HepG2 (cell line): ENCODE measurements at regions of chr2 and their contacts with region 1.

Region 1: GRCh38 chr2:26772064-26773001 is 8.2 kb downstream of the SLC35F6 start:
- DNase-seq: peak; percentile 83
- ATAC-seq: peak; percentile 83
- H3K4me3 ChIP-seq: no peak overlapping the region
- H3K27ac ChIP-seq: peak overlapping the region; percentile 1
- H3K4me1 ChIP-seq: peaks cover 24% of the 10 kb centered on the region
- H3K27me3 ChIP-seq: no peaks in the 10 kb centered on the region
- CTCF ChIP-seq: no peak
- EP300 ChIP-seq: peak in 1 of 2 experiments; percentile 42; a peak in 1 of 4 replicates
- POLR2A ChIP-seq: no peak
- RAD21 ChIP-seq: no peak

Region 2: DNA sequence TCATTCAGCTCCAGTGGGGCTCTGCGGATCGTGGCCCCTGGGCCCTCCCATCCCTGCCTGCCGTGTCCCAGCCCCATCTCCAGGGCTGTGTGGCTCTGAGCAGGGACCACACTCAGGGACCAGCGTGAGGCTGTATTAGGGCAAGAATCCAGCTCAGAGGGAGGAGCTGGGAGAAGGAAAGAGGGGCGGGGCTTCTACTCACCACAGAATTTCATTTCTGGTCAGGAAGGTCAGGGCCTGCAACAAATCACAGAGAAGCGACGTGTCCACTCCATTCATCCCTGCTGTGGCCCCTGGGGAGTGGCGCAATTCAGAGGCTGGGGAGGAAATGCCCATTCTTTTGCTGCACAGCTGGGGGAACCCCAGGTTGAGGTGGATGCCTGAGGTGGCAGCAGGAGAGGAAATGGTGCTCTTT is 132.0 kb before region 1 on chr2:
- CTCF ChIA-PET with region 1: no interaction called
- POLR2A ChIA-PET with region 1: no interaction called
- in situ Hi-C with region 1: no loop called
- intact Hi-C with region 1: no loop called
- DNase-seq: peak; percentile 18
- ATAC-seq: peak; percentile 44; the same call in 2 of the 3 replicates
- H3K4me3 ChIP-seq: no peak overlapping the region
- H3K27ac ChIP-seq: no peak overlapping the region
- H3K4me1 ChIP-seq: no peaks in the 10 kb centered on the region
- H3K27me3 ChIP-seq: peaks cover 4 to 61% of the 10 kb centered on the region in 2 experiments; a peak in 4 of 5 replicates
- CTCF ChIP-seq: no peak
- EP300 ChIP-seq: no peak
- POLR2A ChIP-seq: no peak
- RAD21 ChIP-seq: no peak

Region 3: DNA sequence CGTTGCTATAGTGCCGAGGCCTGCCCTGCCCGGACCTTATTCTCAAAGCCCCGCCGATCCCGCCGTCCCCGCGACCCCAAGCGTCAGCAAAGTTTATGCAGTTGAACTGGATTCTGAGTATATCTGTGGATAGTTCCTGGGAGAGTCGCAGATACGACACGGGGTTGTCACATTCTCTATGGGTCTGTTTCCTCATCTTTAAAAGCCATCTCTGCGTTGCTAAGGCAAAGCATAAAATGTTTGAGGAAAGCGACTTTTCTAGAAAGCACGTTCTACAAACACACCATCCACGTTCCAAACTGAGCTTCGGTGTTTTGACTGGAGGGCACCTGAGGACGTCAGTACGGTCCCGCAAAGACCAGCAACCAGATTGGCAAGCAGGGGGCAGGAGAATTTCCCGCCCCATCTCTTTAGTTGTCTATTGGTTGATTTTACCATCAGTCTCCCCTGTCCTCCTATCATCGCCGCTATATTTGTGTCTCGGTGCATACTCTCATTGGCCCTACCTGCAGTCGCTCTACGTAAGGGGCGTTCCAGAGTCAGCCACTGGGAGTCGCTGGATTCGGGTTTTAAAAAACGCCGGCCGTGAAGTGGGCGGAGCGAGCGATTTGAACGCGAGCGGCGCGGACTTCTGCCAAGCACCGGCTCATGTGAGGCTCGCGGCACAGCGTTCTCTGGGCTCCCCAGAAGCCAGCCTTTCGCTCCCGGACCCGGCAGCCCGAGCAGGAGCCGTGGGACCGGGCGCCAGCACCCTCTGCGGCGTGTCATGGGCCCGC is 13.3 kb after region 1 on chr2 and contains the start of gene CENPA:
- CTCF ChIA-PET with region 1: no interaction called
- POLR2A ChIA-PET with region 1: interaction called, 6 read pairs
- in situ Hi-C with region 1: no loop called
- intact Hi-C with region 1: loop called (anchors 1 kb)
- DNase-seq: peak; percentile 100
- ATAC-seq: peak; percentile 99
- H3K4me3 ChIP-seq: peak within 1 kb of the TSS; percentile 91 to 92 (median 91)
- H3K27ac ChIP-seq: peak within 1 kb of the TSS; percentile 60
- H3K4me1 ChIP-seq: peaks cover 51% of the 10 kb centered on the region
- H3K27me3 ChIP-seq: no peaks in the 10 kb centered on the region; a peak in 1 of 5 replicates
- CTCF ChIP-seq: peak; percentile 26
- EP300 ChIP-seq: peak in 1 of 2 experiments; percentile 6; a peak in 1 of 4 replicates
- POLR2A ChIP-seq: peak; percentile 68 to 70
- RAD21 ChIP-seq: peak; percentile 63
- total RNA-seq, gene CENPA: 38.5 and 45.8 TPM in 2 replicates